Astrocyte of the cerebellum (primary cell): ENCODE measurements at regions of chr15 and their contacts with region 1.

Region 1: GRCh38 chr15:37595426-37595970 is 338.9 kb upstream of the TMCO5A start:
- DNase-seq: no peak
- H3K4me3 ChIP-seq: no peak overlapping the region
- CTCF ChIP-seq: no peak

Region 2: DNA sequence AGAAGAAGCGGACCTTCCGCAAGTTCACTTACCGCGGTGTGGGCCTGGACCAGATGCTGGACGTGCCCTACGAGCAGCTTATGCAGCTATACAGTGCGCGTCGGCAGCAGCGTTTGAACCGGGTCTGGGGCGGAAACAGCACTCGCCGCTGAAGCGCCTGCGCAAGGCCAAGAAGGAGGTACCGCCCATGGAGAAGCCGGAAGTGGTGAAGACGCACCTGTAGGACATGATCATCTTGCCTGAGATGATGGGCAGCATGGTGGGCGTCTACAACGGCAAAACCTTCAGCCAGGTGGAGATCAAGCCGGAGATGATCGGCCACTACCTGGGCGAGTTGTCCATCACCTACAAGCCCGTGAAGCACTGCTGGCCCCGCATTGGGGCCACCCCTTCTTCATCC is 104.8 kb before region 1 on chr15:
- in situ Hi-C with region 1: no loop called
- DNase-seq: no peak
- H3K4me3 ChIP-seq: no peak overlapping the region
- CTCF ChIP-seq: no peak

Region 3: GRCh38 chr15:37638116-37638515 is 42.6 kb after region 1 on chr15:
- in situ Hi-C with region 1: loop called (anchors 5 kb)
- DNase-seq: no peak
- H3K4me3 ChIP-seq: no peak overlapping the region
- CTCF ChIP-seq: no peak

Region 4: GRCh38 chr15:37698679-37699078 is 103.2 kb after region 1 on chr15:
- in situ Hi-C with region 1: no loop called
- DNase-seq: no peak
- H3K4me3 ChIP-seq: no peak overlapping the region
- CTCF ChIP-seq: no peak